ENCODE measurements at regions of chr1 and their contacts with region 1.

Region 1: DNA sequence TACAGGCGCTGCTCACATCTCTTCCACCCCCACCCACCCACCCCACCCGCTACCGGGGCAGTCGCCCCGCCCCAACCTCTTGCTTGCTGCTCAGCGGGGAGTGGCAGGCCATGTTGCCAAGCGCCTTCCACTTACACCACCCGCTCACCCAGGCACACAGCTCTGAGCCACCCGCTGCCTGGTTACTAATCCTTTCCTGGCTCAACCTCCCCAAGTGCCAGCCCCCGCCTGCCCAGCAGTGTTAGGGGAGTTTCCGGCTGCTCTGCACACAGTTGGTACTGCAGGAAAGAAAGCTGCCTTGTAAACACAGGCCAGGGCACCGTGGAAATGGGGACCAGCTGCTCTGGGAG is 56.2 kb downstream of the LACTBL1 start:
- DNase-seq: peak in 1 of 3 donors; percentile 35
- ATAC-seq: no peak
- H3K4me3 ChIP-seq: no peak overlapping the region
- H3K27ac ChIP-seq: no peak overlapping the region
- H3K4me1 ChIP-seq: no peaks in the 10 kb centered on the region
- H3K27me3 ChIP-seq: no peaks in the 10 kb centered on the region
- CTCF ChIP-seq: no peak
- POLR2A ChIP-seq: no peak

Region 2: GRCh38 chr1:22592919-22593790 is 323.3 kb before region 1 on chr1:
- intact Hi-C with region 1: loop called in 1 of 2 experiments (anchors 10 kb)
- DNase-seq: no peak
- ATAC-seq: peak in 1 of 4 donors; percentile 6
- H3K4me3 ChIP-seq: no peak overlapping the region
- H3K27ac ChIP-seq: no peak overlapping the region
- H3K4me1 ChIP-seq: no peaks in the 10 kb centered on the region
- H3K27me3 ChIP-seq: no peaks in the 10 kb centered on the region
- CTCF ChIP-seq: no peak
- POLR2A ChIP-seq: no peak

Region 3: GRCh38 chr1:22969304-22969709 is 52.9 kb after region 1 on chr1:
- intact Hi-C with region 1: no loop called
- DNase-seq: peak in 1 of 3 donors; percentile 3
- ATAC-seq: no peak
- H3K4me3 ChIP-seq: no peak overlapping the region
- H3K27ac ChIP-seq: no peak overlapping the region
- H3K4me1 ChIP-seq: no peaks in the 10 kb centered on the region
- H3K27me3 ChIP-seq: no peaks in the 10 kb centered on the region
- CTCF ChIP-seq: no peak
- POLR2A ChIP-seq: no peak

Measured in right lobe of liver (tissue), 6 donors.